ENCODE measurements at regions of chr17 and their contacts with region 1.

Region 1: DNA sequence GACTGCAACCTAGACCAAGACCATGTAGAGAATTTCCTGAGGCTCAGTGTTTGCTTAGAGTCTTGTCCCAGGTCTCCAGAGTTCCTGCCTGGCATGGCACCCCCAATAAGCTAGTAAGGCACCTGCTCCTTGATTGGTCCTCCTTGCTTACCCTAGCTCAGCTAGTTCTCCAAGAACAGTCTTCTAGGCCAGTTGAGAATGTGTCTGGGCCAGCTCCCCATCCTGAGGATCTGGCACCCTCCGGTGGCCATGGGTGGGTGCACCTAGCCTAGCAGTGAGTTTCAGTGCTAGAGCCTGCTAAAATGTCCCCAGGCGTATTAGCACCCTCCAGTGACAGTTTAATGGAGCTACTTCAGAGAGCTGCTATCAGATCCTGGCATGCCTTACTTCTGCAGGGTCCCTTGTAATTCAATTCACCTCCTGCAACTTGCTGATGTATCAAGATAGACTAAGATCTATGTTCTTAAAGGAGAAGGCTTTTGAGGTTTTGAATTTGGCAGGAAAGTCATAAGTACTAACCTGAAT is 44.4 kb upstream of the MED13 start:
- DNase-seq: peak; percentile 84
- H3K4me3 Mint-ChIP-seq: no peak overlapping the region
- H3K27ac Mint-ChIP-seq: no peak overlapping the region
- H3K4me1 Mint-ChIP-seq: no peaks in the 10 kb centered on the region
- H3K27me3 Mint-ChIP-seq: peaks cover 3% of the 10 kb centered on the region

Region 2: GRCh38 chr17:61635913-61636432 is 473.5 kb before region 1 on chr17:
- CTCF ChIA-PET with region 1: interaction called, 4 read pairs
- POLR2A ChIA-PET with region 1: no interaction called
- intact Hi-C with region 1: loop called (anchors 1 kb)
- DNase-seq: peak; percentile 65
- H3K4me3 Mint-ChIP-seq: no peak overlapping the region
- H3K27ac Mint-ChIP-seq: no peak overlapping the region
- H3K4me1 Mint-ChIP-seq: no peaks in the 10 kb centered on the region
- H3K27me3 Mint-ChIP-seq: peaks cover 34% of the 10 kb centered on the region

Region 3: GRCh38 chr17:61927200-61928165 is 182.0 kb before region 1 on chr17 and contains the start of gene INTS2:
- CTCF ChIA-PET with region 1: no interaction called
- POLR2A ChIA-PET with region 1: no interaction called
- intact Hi-C with region 1: loop called (anchors 2 kb)
- DNase-seq: peak; percentile 97
- H3K4me3 Mint-ChIP-seq: peak within 1 kb of the TSS; percentile 90
- H3K27ac Mint-ChIP-seq: peak within 1 kb of the TSS; percentile 92
- H3K4me1 Mint-ChIP-seq: peaks cover 20% of the 10 kb centered on the region
- H3K27me3 Mint-ChIP-seq: no peaks in the 10 kb centered on the region
- total RNA-seq, gene INTS2: 23.0 to 27.4 TPM

Region 4: GRCh38 chr17:62059414-62059813 is 50.0 kb before region 1 on chr17:
- CTCF ChIA-PET with region 1: interaction called, 16 read pairs
- POLR2A ChIA-PET with region 1: no interaction called
- intact Hi-C with region 1: loop called (anchors 2 kb)
- DNase-seq: no peak
- H3K4me3 Mint-ChIP-seq: no peak overlapping the region
- H3K27ac Mint-ChIP-seq: no peak overlapping the region
- H3K4me1 Mint-ChIP-seq: peaks cover 64% of the 10 kb centered on the region
- H3K27me3 Mint-ChIP-seq: no peaks in the 10 kb centered on the region

Region 5: GRCh38 chr17:62075308-62075815 is 34.1 kb before region 1 on chr17:
- CTCF ChIA-PET with region 1: interaction called, 15 read pairs
- POLR2A ChIA-PET with region 1: interaction called, 3 read pairs
- intact Hi-C with region 1: no loop called
- DNase-seq: peak; percentile 38
- H3K4me3 Mint-ChIP-seq: no peak overlapping the region
- H3K27ac Mint-ChIP-seq: no peak overlapping the region
- H3K4me1 Mint-ChIP-seq: peaks cover 6% of the 10 kb centered on the region
- H3K27me3 Mint-ChIP-seq: peaks cover 6% of the 10 kb centered on the region

Measured in activated CD4-positive, alpha-beta memory T cell treated with anti-CD3 and anti-CD28 coated beads for 36 hours (primary cell).